Ascending aorta (tissue), 2 donors: ENCODE measurements at regions of chr2 and their contacts with region 1.

Region 1: GRCh38 chr2:106193977-106194778 is at the start of gene UXS1:
- DNase-seq: peak; percentile 93 to 99
- H3K4me3 ChIP-seq: peak within 1 kb of the TSS; percentile 93 to 96
- H3K27ac ChIP-seq: peak within 1 kb of the TSS; percentile 74 to 78
- H3K4me1 ChIP-seq: peaks cover 0 to 8% of the 10 kb centered on the region in 2 donors
- H3K27me3 ChIP-seq: no peaks in the 10 kb centered on the region
- CTCF ChIP-seq: no peak
- total RNA-seq, gene UXS1: 146 TPM

Region 2: GRCh38 chr2:105403785-105404698 is 790.1 kb before region 1 on chr2:
- intact Hi-C with region 1: loop called (anchors 10 kb)
- DNase-seq: peak in 1 of 2 donors; percentile 73
- H3K4me3 ChIP-seq: no peak overlapping the region
- H3K27ac ChIP-seq: peak overlapping the region; percentile 24 to 43
- H3K4me1 ChIP-seq: peaks cover under 1 to 19% of the 10 kb centered on the region in 2 donors
- H3K27me3 ChIP-seq: no peaks in the 10 kb centered on the region
- CTCF ChIP-seq: no peak

Region 3: DNA sequence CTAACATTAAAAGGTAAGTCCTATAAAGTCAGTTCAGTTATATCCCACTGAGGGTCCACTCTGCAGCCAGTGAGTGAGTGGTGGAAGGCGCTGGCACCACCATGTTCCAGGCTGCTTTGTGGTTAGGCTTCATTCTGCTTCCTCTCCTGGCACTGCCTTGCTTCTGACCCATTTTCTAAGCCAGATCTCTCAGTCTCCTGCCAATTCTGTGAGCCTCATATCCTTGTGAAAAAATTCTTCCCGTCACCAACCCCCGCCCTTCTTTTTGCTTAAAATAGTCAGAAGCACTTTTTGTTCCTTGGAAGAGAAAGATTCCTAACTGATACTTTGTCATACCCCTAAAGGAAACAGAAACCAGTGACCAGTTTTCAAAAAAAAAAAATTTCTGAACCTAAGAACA is 589.2 kb before region 1 on chr2:
- intact Hi-C with region 1: loop called (anchors 10 kb)
- DNase-seq: peak in 1 of 2 donors; percentile 90
- H3K4me3 ChIP-seq: peak overlapping the region in 1 of 2 donors; percentile 21
- H3K27ac ChIP-seq: peak overlapping the region; percentile 58 to 68
- H3K4me1 ChIP-seq: peaks cover 0 to 19% of the 10 kb centered on the region in 2 donors
- H3K27me3 ChIP-seq: no peaks in the 10 kb centered on the region
- CTCF ChIP-seq: no peak

Region 4: DNA sequence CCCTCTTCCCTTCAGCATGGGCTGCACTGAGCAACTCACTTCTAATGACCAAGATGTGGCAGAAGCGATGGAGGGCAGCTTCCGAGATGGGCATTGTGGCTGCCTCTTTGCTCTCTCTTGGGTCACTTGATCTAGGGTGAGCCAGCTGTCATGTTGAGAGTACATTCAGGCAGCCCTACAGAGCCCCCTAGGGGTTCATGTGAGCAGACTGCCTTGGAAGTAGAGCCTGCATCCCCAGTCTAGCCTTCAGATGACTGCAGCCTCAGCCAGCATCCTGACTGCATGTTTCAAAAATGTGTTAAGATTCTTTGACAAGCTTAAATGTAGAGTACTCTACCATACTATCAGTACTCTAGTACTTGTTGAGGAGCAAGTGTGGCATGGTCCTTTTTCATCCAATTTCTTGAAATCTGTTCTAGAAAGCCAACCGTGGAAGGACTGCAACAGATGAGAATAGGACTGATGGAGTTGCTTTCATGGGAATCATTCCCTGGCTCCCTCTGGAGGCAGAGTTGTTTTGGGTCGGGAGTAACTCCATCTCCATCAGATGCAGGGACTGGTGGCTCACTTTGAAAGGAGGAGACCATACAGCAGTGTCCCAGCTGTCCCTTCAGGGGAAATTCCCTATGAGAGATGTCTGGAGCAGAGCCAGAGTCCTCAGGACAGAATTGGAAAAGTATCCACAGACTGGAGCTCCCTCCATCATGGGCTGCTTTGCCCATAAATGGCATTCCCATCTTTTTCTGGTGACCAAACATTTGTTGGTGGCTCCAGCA is 305.4 kb before region 1 on chr2:
- intact Hi-C with region 1: loop called (anchors 10 kb)
- DNase-seq: no peak
- H3K4me3 ChIP-seq: no peak overlapping the region
- H3K27ac ChIP-seq: peak overlapping the region; percentile 65 to 69
- H3K4me1 ChIP-seq: peaks cover 0 to 43% of the 10 kb centered on the region in 2 donors
- H3K27me3 ChIP-seq: no peaks in the 10 kb centered on the region
- CTCF ChIP-seq: no peak

Region 5: DNA sequence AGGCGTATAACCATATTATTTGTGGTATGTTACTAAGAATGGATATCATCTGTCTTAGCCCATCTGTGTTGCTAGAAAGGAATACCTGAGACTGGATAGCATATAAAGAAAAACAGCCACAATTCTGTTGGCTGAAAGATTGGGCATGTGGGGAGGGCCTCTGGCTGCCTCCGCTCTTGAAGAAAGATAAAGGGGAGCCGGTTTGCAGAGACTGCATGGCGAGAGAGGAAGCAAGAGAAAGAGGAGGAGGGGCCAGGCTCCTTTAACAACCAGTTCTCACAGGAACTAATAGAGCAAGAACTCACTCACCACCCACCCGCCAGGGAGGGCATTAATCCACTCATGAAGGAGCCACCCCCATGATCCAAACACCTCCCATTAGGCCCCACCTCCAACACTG is 29.2 kb after region 1 on chr2:
- intact Hi-C with region 1: no loop called
- DNase-seq: no peak
- H3K4me3 ChIP-seq: no peak overlapping the region
- H3K27ac ChIP-seq: no peak overlapping the region
- H3K4me1 ChIP-seq: no peaks in the 10 kb centered on the region
- H3K27me3 ChIP-seq: no peaks in the 10 kb centered on the region
- CTCF ChIP-seq: no peak